PC-9 (cell line): ENCODE measurements at regions of chr18 and their contacts with region 1.

Region 1: GRCh38 chr18:35949903-35950627 is 22.4 kb upstream of the RMP24 start:
- DNase-seq: peak in 1 of 2 experiments; percentile 23
- H3K4me3 ChIP-seq: peak overlapping the region; percentile 51; the same call in 1 of the 2 replicates
- H3K27ac ChIP-seq: no peak overlapping the region
- H3K4me1 ChIP-seq: no peaks in the 10 kb centered on the region
- H3K27me3 ChIP-seq: 0 out of 2 replicates have a peak, but pooled peaks cover 3% of the 10 kb centered on the region
- CTCF ChIP-seq: peak; percentile 87

Region 2: DNA sequence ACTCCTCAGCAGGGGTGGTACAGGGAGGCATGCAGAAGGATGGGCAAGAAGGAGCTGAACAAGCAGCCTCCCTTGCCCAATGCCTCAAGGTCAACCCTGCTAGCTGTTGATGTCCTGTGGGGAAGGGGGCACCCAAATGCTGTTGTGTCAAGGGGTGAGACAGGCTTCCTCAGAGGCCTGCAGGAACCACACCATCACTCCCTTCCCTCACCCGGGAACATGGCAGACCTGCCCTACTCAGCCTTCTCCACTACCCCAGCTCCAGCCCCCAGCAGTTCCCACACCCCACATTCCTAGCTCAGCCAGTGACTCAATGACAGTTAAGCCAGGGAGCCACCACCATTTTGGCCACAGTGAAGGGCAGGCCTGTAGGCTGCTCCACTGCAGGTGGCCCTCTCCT is 31.5 kb before region 1 on chr18:
- CTCF ChIA-PET with region 1: interaction called, 15 read pairs
- POLR2A ChIA-PET with region 1: no interaction called
- intact Hi-C with region 1: no loop called
- DNase-seq: no peak
- H3K4me3 ChIP-seq: no peak overlapping the region
- H3K27ac ChIP-seq: no peak overlapping the region
- H3K4me1 ChIP-seq: no peaks in the 10 kb centered on the region
- H3K27me3 ChIP-seq: no peaks in the 10 kb centered on the region
- CTCF ChIP-seq: no peak